Uterus (tissue), 4 donors: ENCODE measurements at regions of chr1 and their contacts with region 1.

Region 1: DNA sequence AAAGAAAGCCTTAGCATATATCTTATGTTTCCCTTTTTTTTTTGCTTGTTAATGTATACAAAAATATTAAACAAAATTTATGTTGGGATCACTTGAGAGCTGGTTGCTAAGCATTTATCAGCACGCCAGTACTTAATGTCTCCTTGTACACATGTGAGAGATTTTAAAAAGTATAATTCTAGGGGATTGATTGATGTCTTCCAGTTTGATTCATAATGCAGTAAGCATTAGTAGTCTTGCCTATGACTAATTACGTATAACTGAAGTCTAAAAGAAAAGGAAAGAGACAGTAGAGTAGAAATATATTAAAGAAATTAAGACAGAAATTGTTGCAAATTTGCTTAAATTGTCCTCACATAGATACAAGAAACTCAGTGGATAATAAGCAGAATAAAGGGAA is 1630.4 kb upstream of the B3GALT2 start:
- DNase-seq: no peak
- H3K4me3 ChIP-seq: no peak overlapping the region
- H3K27ac ChIP-seq: no peak overlapping the region
- H3K4me1 ChIP-seq: no peaks in the 10 kb centered on the region
- H3K27me3 ChIP-seq: no peaks in the 10 kb centered on the region
- CTCF ChIP-seq: no peak
- POLR2A ChIP-seq: no peak

Region 2: DNA sequence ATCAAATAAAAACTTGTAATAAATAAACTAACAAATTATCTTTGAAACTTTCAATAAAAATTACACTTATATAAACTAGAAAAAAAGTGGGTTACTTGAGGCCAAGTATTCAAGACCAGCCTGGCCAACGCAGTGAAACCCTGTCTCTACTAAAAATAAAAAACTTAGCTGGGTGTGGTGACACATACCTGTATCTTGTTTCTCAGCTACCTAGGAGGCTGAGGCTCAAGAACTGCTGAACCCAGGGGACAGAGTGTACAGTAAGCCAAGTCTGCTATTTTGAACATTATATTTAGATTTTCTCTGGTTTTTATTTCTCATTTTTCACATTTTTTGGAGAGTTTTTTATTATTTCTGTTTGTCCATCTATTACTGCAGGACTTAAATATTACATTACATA is 232.8 kb before region 1 on chr1:
- intact Hi-C with region 1: loop called (anchors 5 kb)
- DNase-seq: no peak
- H3K4me3 ChIP-seq: no peak overlapping the region
- H3K27ac ChIP-seq: no peak overlapping the region
- H3K4me1 ChIP-seq: no peaks in the 10 kb centered on the region
- H3K27me3 ChIP-seq: no peaks in the 10 kb centered on the region
- CTCF ChIP-seq: no peak
- POLR2A ChIP-seq: no peak